H1 (cell line): ENCODE measurements at regions of chr20 and their contacts with region 1.

Region 1: GRCh38 chr20:46681032-46681854 is 8.0 kb downstream of the TP53RK start:
- DNase-seq: peak in 1 of 2 experiments; percentile 92
- H3K4me3 ChIP-seq: no peak overlapping the region
- H3K27ac ChIP-seq: no peak overlapping the region
- H3K4me1 ChIP-seq: peaks cover 12 to 22% (median 16%) of the 10 kb centered on the region in 4 experiments
- H3K27me3 ChIP-seq: no peaks in the 10 kb centered on the region
- CTCF ChIP-seq: peak; percentile 49 to 91 (median 79)
- EP300 ChIP-seq: no peak
- POLR2A ChIP-seq: no peak
- RAD21 ChIP-seq: peak; percentile 77 to 80

Region 2: GRCh38 chr20:46545077-46545826 is 136.0 kb before region 1 on chr20:
- CTCF ChIA-PET with region 1: interaction called, 22 read pairs
- POLR2A ChIA-PET with region 1: interaction called, 6 read pairs
- DNase-seq: no peak
- H3K4me3 ChIP-seq: no peak overlapping the region
- H3K27ac ChIP-seq: no peak overlapping the region
- H3K4me1 ChIP-seq: peaks cover 0 to under 1% (median 0%) of the 10 kb centered on the region in 4 experiments; a peak in 2 of 7 replicates
- H3K27me3 ChIP-seq: no peaks in the 10 kb centered on the region; a peak in 2 of 7 replicates
- CTCF ChIP-seq: no peak
- EP300 ChIP-seq: no peak
- POLR2A ChIP-seq: no peak
- RAD21 ChIP-seq: no peak

Region 3: DNA sequence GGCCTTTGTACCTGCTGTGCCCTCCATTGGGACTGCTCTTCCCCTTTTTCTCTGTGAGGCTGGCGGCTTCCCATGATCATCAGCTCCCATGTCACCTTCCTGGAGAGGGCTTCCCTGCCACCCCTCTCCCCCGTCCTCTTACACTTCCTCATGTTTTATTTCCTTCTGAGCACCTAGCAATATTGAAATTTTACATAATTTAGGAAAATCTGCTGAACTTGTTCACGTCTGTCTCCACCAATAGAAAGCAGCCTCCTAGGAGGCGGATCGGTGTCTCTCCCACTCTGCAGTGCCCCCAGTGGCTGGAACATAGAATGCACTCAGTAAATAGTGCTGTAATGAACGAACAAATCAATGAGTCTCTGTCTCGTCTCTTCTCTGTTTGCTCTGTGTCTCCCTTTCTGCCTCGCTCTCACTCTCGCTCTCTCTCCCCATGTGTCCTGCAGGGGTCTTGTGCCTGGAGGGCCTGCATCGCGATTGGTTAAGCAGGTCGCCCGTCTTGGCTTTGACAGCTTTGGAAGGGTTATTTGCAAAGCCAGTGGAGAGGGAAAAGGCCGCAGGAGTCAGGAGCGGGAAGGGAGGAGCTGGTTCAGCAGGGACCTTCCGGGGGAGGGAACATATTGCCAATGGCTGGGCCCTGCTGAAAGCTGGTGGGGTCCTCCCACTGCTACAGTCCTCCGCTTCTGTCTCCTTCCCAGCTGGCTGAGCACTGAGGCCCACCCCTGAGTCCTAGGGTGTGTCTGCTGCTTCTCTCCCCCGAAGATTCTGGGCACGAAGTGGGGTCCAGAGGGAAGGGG is 118.7 kb before region 1 on chr20:
- CTCF ChIA-PET with region 1: interaction called, 13 read pairs
- POLR2A ChIA-PET with region 1: interaction called, 5 read pairs
- DNase-seq: peak; percentile 50 to 90
- H3K4me3 ChIP-seq: peak overlapping the region in 3 of 4 experiments; percentile 27 to 51 (median 45); a peak in 6 of 8 replicates
- H3K27ac ChIP-seq: peak overlapping the region; percentile 78
- H3K4me1 ChIP-seq: peaks cover 8 to 19% (median 13%) of the 10 kb centered on the region in 4 experiments
- H3K27me3 ChIP-seq: no peaks in the 10 kb centered on the region
- CTCF ChIP-seq: peak; percentile 64 to 92 (median 68)
- EP300 ChIP-seq: no peak
- POLR2A ChIP-seq: no peak
- RAD21 ChIP-seq: peak; percentile 46 to 56

Region 4: GRCh38 chr20:46621492-46621891 is 59.8 kb before region 1 on chr20:
- CTCF ChIA-PET with region 1: interaction called, 10 read pairs
- POLR2A ChIA-PET with region 1: interaction called, 4 read pairs
- DNase-seq: no peak
- H3K4me3 ChIP-seq: no peak overlapping the region
- H3K27ac ChIP-seq: no peak overlapping the region
- H3K4me1 ChIP-seq: peaks cover 0 to 8% (median 3%) of the 10 kb centered on the region in 4 experiments; a peak in 3 of 7 replicates
- H3K27me3 ChIP-seq: no peaks in the 10 kb centered on the region
- CTCF ChIP-seq: no peak
- EP300 ChIP-seq: no peak
- POLR2A ChIP-seq: no peak
- RAD21 ChIP-seq: no peak

Region 5: GRCh38 chr20:46648903-46649649 is 32.2 kb before region 1 on chr20:
- CTCF ChIA-PET with region 1: interaction called, 14 read pairs
- POLR2A ChIA-PET with region 1: interaction called, 5 read pairs
- DNase-seq: no peak
- H3K4me3 ChIP-seq: no peak overlapping the region
- H3K27ac ChIP-seq: no peak overlapping the region
- H3K4me1 ChIP-seq: peaks cover 0 to 7% (median 1%) of the 10 kb centered on the region in 4 experiments; a peak in 3 of 7 replicates
- H3K27me3 ChIP-seq: peaks cover 0 to 25% (median 15%) of the 10 kb centered on the region in 4 experiments; a peak in 5 of 7 replicates
- CTCF ChIP-seq: peak in 1 of 3 experiments; percentile 40; a peak in 1 of 4 replicates
- EP300 ChIP-seq: no peak
- POLR2A ChIP-seq: no peak
- RAD21 ChIP-seq: peak in 1 of 2 experiments; percentile 16; a peak in 1 of 4 replicates

Region 6: GRCh38 chr20:46670585-46671584 is 10.4 kb before region 1 on chr20:
- CTCF ChIA-PET with region 1: interaction called, 21 read pairs
- POLR2A ChIA-PET with region 1: interaction called, 7 read pairs
- DNase-seq: no peak
- H3K4me3 ChIP-seq: no peak overlapping the region
- H3K27ac ChIP-seq: no peak overlapping the region
- H3K4me1 ChIP-seq: peaks cover 3 to 17% (median 8%) of the 10 kb centered on the region in 4 experiments; a peak in 6 of 7 replicates
- H3K27me3 ChIP-seq: no peaks in the 10 kb centered on the region; a peak in 2 of 7 replicates
- CTCF ChIP-seq: no peak
- EP300 ChIP-seq: no peak
- POLR2A ChIP-seq: no peak
- RAD21 ChIP-seq: no peak

Region 7: DNA sequence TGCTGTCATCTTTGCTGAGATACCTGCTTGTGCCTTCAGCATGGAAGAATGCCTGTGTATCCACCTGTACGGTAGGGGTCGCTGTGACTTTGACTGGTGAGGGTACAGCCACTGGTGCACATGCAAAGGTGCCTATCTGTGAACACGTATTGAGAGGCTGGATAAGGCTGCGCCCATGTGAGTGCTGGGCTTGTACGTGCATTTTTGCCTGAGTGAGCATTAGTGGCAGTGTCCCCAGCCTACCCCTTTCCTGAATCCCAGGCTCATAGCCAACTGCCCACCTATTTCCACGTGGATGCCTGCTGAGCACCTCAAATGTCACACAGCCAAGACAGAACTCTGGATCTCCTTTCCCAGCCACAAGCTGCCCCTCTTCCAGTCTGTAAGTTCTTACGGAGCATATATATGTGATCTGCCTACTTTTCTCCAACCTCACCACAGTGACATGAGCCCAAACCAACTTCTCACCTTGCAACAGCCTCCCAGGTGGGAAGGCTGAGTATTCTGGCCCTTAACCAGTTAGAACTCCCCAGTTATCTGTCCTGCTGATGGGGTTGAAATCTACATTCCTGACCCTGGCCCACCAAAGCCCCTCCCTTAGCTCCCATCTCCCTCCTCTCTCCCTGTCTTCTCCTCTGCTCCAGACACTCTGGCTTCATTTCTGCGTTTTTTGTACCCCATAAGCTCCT is 27.1 kb after region 1 on chr20:
- CTCF ChIA-PET with region 1: interaction called, 11 read pairs
- POLR2A ChIA-PET with region 1: interaction called, 22 read pairs
- DNase-seq: peak in 1 of 2 experiments; percentile 83
- H3K4me3 ChIP-seq: no peak overlapping the region
- H3K27ac ChIP-seq: no peak overlapping the region
- H3K4me1 ChIP-seq: peaks cover 4 to 13% (median 10%) of the 10 kb centered on the region in 4 experiments
- H3K27me3 ChIP-seq: no peaks in the 10 kb centered on the region; a peak in 2 of 7 replicates
- CTCF ChIP-seq: peak; percentile 70 to 95 (median 90)
- EP300 ChIP-seq: no peak
- POLR2A ChIP-seq: no peak
- RAD21 ChIP-seq: peak in 1 of 2 experiments; percentile 49; a peak in 3 of 4 replicates